Sigmoid colon (tissue), 7 donors: ENCODE measurements at regions of chr6 and their contacts with region 1.

Region 1: GRCh38 chr6:138115877-138116660 is 8.8 kb upstream of the PERP start:
- DNase-seq: peak; percentile 74
- H3K4me3 ChIP-seq: no peak overlapping the region
- H3K27ac ChIP-seq: no peak overlapping the region
- H3K4me1 ChIP-seq: peaks cover 0 to 4% (median 0%) of the 10 kb centered on the region in 4 donors
- H3K27me3 ChIP-seq: peaks cover 0 to 5% (median 0%) of the 10 kb centered on the region in 3 donors
- CTCF ChIP-seq: peak; percentile 31 to 78 (median 65)
- EP300 ChIP-seq: no peak
- POLR2A ChIP-seq: no peak

Region 2: GRCh38 chr6:137995371-137995770 is 120.7 kb before region 1 on chr6:
- intact Hi-C with region 1: no loop called
- DNase-seq: no peak
- H3K4me3 ChIP-seq: no peak overlapping the region
- H3K27ac ChIP-seq: no peak overlapping the region
- H3K4me1 ChIP-seq: no peaks in the 10 kb centered on the region
- H3K27me3 ChIP-seq: no peaks in the 10 kb centered on the region
- CTCF ChIP-seq: no peak
- EP300 ChIP-seq: no peak
- POLR2A ChIP-seq: no peak

Region 3: DNA sequence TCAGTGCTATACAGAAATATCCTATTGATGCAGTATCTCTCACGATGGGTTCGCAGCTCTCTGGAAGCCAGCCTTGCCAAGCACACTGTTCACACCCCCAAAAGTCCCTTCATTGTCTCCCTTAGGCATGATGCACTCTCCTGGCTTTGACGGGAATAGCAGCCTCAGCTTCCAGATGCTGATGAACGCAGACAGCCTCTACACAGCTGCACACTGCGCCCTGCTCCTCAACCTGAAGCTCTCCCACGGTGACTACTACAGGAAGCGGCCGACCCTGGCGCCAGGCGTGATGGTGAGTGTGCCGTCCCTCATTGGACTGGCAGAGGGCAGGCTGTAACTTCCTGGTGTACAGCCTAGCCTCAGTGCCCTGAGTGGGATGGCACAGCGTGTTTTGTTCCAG is 162.3 kb after region 1 on chr6:
- intact Hi-C with region 1: loop called (anchors 5 kb)
- DNase-seq: no peak
- H3K4me3 ChIP-seq: no peak overlapping the region
- H3K27ac ChIP-seq: no peak overlapping the region
- H3K4me1 ChIP-seq: no peaks in the 10 kb centered on the region
- H3K27me3 ChIP-seq: no peaks in the 10 kb centered on the region
- CTCF ChIP-seq: peak in 1 of 4 experiments; percentile 16
- EP300 ChIP-seq: no peak
- POLR2A ChIP-seq: no peak

Region 4: DNA sequence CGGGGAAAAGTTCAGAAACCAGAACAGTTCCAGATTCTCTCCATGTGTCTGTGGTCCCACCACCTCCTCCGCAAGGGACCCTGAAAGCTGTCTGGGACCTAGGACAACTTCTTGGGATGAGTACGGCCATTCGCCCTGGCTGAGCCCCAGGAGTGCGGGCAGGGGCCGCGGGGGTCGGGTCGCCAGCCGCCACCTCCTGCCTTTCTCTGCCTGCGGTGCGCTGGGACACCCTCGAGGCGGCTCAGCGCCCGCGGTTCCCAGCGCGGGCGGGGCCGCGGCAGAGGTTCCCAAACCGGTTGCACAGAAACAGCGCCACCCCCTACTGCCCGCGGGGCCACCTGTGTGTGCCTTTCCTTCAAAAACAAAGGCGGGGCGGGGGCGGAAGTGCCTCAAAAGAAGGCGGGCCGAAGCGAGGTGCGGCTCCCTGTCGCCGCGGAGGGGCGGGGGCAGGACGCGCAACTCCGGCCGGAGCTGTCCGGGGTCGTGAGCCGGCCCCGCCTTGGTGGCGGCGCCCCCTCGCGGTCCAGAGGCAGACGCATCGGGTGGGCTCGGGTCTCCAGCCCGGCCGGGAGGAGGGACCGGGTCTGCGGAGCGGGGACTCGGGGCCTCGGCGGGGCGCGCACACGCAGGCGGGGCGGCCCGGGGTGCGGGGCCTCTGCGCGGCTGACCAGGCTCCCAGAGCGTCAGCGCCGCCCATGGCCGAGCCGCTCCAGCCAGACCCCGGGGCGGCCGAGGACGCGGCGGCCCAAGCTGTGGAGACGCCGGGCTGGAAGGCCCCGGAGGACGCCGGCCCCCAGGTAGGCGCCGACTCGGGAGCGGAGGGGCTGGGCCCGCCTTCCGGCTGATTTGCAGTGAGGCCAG is 288.0 kb after region 1 on chr6 and contains the start of gene HEBP2:
- intact Hi-C with region 1: loop called (anchors 2 kb)
- DNase-seq: peak; percentile 96
- H3K4me3 ChIP-seq: peak within 1 kb of the TSS; percentile 66 to 95 (median 76)
- H3K27ac ChIP-seq: peak within 1 kb of the TSS; percentile 90 to 94 (median 92)
- H3K4me1 ChIP-seq: peaks cover 0 to 15% (median 11%) of the 10 kb centered on the region in 4 donors
- H3K27me3 ChIP-seq: no peaks in the 10 kb centered on the region
- CTCF ChIP-seq: peak in 1 of 4 experiments; percentile 44
- EP300 ChIP-seq: no peak
- POLR2A ChIP-seq: peak; percentile 35 to 63
- total RNA-seq, gene HEBP2: 46.3 to 75.3 (median 65.5) TPM

Region 5: GRCh38 chr6:138428944-138429598 is 313.0 kb after region 1 on chr6:
- intact Hi-C with region 1: loop called (anchors 2 kb)
- DNase-seq: no peak
- H3K4me3 ChIP-seq: peak overlapping the region in 3 of 4 donors; percentile 0 to 18 (median 13)
- H3K27ac ChIP-seq: peak overlapping the region in 3 of 4 donors; percentile 39 to 51 (median 47)
- H3K4me1 ChIP-seq: peaks cover 0 to 21% (median 15%) of the 10 kb centered on the region in 4 donors
- H3K27me3 ChIP-seq: no peaks in the 10 kb centered on the region
- CTCF ChIP-seq: peak in 3 of 4 experiments; percentile 26 to 60 (median 49)
- EP300 ChIP-seq: no peak
- POLR2A ChIP-seq: no peak

Region 6: GRCh38 chr6:138509371-138509770 is 393.3 kb after region 1 on chr6:
- intact Hi-C with region 1: loop called (anchors 10 kb)
- DNase-seq: peak; percentile 65
- H3K4me3 ChIP-seq: no peak overlapping the region
- H3K27ac ChIP-seq: no peak overlapping the region
- H3K4me1 ChIP-seq: no peaks in the 10 kb centered on the region
- H3K27me3 ChIP-seq: no peaks in the 10 kb centered on the region
- CTCF ChIP-seq: peak in 3 of 4 experiments; percentile 45 to 56 (median 47)
- EP300 ChIP-seq: no peak
- POLR2A ChIP-seq: no peak

Region 7: GRCh38 chr6:138588805-138589434 is 472.9 kb after region 1 on chr6:
- intact Hi-C with region 1: loop called (anchors 5 kb)
- DNase-seq: peak; percentile 70
- H3K4me3 ChIP-seq: no peak overlapping the region
- H3K27ac ChIP-seq: no peak overlapping the region
- H3K4me1 ChIP-seq: peaks cover 0 to 6% (median 0%) of the 10 kb centered on the region in 4 donors
- H3K27me3 ChIP-seq: no peaks in the 10 kb centered on the region
- CTCF ChIP-seq: peak; percentile 76 to 92 (median 86)
- EP300 ChIP-seq: no peak
- POLR2A ChIP-seq: no peak